ENCODE measurements at regions of chr3 and their contacts with region 1.

Region 1: DNA sequence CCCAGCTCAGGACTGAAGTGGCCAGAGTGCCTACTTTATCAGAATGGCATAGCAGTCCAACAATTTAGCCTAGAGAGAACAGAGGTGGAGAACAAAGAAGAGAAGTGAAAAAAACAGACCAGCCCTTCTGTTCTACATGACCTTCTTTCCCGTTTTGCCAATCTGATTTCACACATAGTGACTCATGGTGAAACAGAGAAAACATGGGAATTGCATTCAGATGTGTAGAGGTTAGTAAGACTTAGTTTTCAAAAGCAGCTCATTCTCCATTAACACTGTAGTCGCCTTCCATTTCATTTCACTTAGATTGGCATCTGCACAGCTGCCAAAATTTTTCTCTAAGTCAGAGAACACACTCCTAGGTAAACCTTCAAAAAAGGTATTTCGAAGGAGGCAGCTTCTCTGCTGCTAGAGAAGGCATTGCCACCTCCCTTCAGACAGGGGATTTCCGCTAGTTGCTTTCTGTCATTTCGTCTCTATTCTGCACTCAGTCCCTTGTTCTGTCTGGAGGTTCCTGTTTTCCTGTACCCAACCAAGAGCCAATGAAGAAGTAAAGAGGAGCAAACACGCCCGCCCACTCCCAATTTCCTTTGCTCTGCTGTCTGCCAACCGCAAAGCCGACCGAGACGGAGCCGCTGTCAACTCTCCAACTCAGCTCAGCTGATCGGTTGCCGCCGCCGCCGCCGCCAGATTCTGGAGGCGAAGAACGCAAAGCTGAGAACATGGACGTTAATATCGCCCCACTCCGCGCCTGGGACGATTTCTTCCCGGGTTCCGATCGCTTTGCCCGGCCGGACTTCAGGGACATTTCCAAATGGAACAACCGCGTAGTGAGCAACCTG is at the start of gene ARL6IP5:
- DNase-seq: peak; percentile 89 to 96 (median 92)
- H3K4me3 ChIP-seq: peak within 1 kb of the TSS; percentile 88 to 95
- H3K4me3 Mint-ChIP-seq: peak within 1 kb of the TSS; percentile 96 to 99 (median 98)
- H3K27ac ChIP-seq: peak within 1 kb of the TSS; percentile 85
- H3K27ac Mint-ChIP-seq: peak within 1 kb of the TSS; percentile 85 to 99 (median 98)
- H3K4me1 ChIP-seq: peaks cover 69% of the 10 kb centered on the region
- H3K4me1 Mint-ChIP-seq: peaks cover 45 to 76% (median 58%) of the 10 kb centered on the region in 4 donors
- H3K27me3 ChIP-seq: no peaks in the 10 kb centered on the region
- H3K27me3 Mint-ChIP-seq: no peaks in the 10 kb centered on the region
- total RNA-seq, gene ARL6IP5: 147 to 156 TPM

Region 2: GRCh38 chr3:69013253-69014021 is 71.1 kb before region 1 on chr3 and contains the start of gene EOGT:
- CTCF ChIA-PET with region 1: no interaction called
- POLR2A ChIA-PET with region 1: interaction called, 13 read pairs
- intact Hi-C with region 1: loop called (anchors 2 kb)
- DNase-seq: peak; percentile 68 to 84 (median 72)
- H3K4me3 ChIP-seq: peak within 1 kb of the TSS; percentile 46 to 64
- H3K4me3 Mint-ChIP-seq: peak within 1 kb of the TSS; percentile 87 to 98 (median 92)
- H3K27ac ChIP-seq: peak within 1 kb of the TSS; percentile 63
- H3K27ac Mint-ChIP-seq: peak within 1 kb of the TSS; percentile 73 to 97 (median 90)
- H3K4me1 ChIP-seq: peaks cover 26% of the 10 kb centered on the region
- H3K4me1 Mint-ChIP-seq: peaks cover 16 to 43% (median 29%) of the 10 kb centered on the region in 4 donors
- H3K27me3 ChIP-seq: no peaks in the 10 kb centered on the region
- H3K27me3 Mint-ChIP-seq: no peaks in the 10 kb centered on the region
- total RNA-seq, gene EOGT: 26.7 to 28.6 TPM

Region 3: GRCh38 chr3:69051756-69052471 is 32.6 kb before region 1 on chr3 and contains the start of gene TMF1:
- CTCF ChIA-PET with region 1: interaction called, 33 read pairs
- POLR2A ChIA-PET with region 1: interaction called, 287 read pairs
- intact Hi-C with region 1: loop called (anchors 1 kb)
- DNase-seq: peak; percentile 96 to 99 (median 98)
- H3K4me3 ChIP-seq: peak within 1 kb of the TSS; percentile 82 to 98
- H3K4me3 Mint-ChIP-seq: peak within 1 kb of the TSS; percentile 94 to 99 (median 98)
- H3K27ac ChIP-seq: peak within 1 kb of the TSS; percentile 96
- H3K27ac Mint-ChIP-seq: peak within 1 kb of the TSS; percentile 97 to 100 (median 99)
- H3K4me1 ChIP-seq: peaks cover 49% of the 10 kb centered on the region
- H3K4me1 Mint-ChIP-seq: peaks cover 32 to 62% (median 41%) of the 10 kb centered on the region in 4 donors
- H3K27me3 ChIP-seq: no peaks in the 10 kb centered on the region
- H3K27me3 Mint-ChIP-seq: no peaks in the 10 kb centered on the region
- total RNA-seq, gene TMF1: 58.5 to 61.0 TPM

Region 4: GRCh38 chr3:69058180-69058946 is 26.2 kb before region 1 on chr3:
- CTCF ChIA-PET with region 1: interaction called, 33 read pairs
- POLR2A ChIA-PET with region 1: interaction called, 287 read pairs
- intact Hi-C with region 1: no loop called
- DNase-seq: peak in 4 of 5 donors; percentile 33 to 55 (median 45)
- H3K4me3 ChIP-seq: no peak overlapping the region
- H3K4me3 Mint-ChIP-seq: peak overlapping the region in 7 of 8 donors; percentile 27 to 75 (median 65)
- H3K27ac ChIP-seq: peak overlapping the region; percentile 17
- H3K27ac Mint-ChIP-seq: peak overlapping the region; percentile 83 to 96 (median 89)
- H3K4me1 ChIP-seq: peaks cover 32% of the 10 kb centered on the region
- H3K4me1 Mint-ChIP-seq: peaks cover 19 to 48% (median 28%) of the 10 kb centered on the region in 4 donors
- H3K27me3 ChIP-seq: no peaks in the 10 kb centered on the region
- H3K27me3 Mint-ChIP-seq: no peaks in the 10 kb centered on the region

Region 5: GRCh38 chr3:69097407-69098086 is 13.0 kb after region 1 on chr3:
- CTCF ChIA-PET with region 1: interaction called, 10 read pairs
- POLR2A ChIA-PET with region 1: interaction called, 117 read pairs
- intact Hi-C with region 1: loop called (anchors 1 kb)
- DNase-seq: no peak
- H3K4me3 ChIP-seq: no peak overlapping the region
- H3K4me3 Mint-ChIP-seq: peak overlapping the region; percentile 11 to 74 (median 48)
- H3K27ac ChIP-seq: no peak overlapping the region
- H3K27ac Mint-ChIP-seq: peak overlapping the region; percentile 57 to 97 (median 88)
- H3K4me1 ChIP-seq: peaks cover 86% of the 10 kb centered on the region
- H3K4me1 Mint-ChIP-seq: peaks cover 52 to 93% (median 71%) of the 10 kb centered on the region in 4 donors
- H3K27me3 ChIP-seq: no peaks in the 10 kb centered on the region
- H3K27me3 Mint-ChIP-seq: no peaks in the 10 kb centered on the region

Region 6: DNA sequence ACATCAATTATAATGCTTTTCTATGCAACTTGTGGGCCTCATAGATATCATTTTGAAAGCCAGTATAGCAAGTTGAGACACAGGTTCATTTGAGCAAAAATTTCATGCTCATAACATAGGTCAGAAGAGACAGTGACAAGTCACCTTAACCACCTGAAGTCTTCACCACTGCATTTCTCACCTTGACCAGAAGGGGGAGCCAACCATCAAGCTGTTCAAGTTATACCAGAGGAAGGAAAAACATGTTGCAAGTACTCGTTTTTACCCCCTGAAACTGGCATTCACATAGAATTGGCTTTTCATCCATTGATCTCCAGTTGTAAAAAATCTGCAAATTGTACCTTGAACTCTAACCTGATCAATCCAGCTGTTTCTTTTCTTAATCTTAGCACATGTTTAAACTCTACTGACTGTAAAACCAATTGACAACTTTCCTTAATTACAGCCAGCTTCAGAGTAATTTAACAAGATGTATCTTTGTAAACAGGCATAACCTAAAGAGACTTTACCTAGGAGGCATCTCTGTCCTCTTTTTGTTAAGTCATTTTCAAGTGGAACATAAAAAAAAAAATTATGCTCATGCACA is 36.4 kb after region 1 on chr3:
- CTCF ChIA-PET with region 1: interaction called, 17 read pairs
- POLR2A ChIA-PET with region 1: interaction called, 4 read pairs
- intact Hi-C with region 1: loop called (anchors 2 kb)
- DNase-seq: peak; percentile 75 to 80 (median 79)
- H3K4me3 ChIP-seq: no peak overlapping the region
- H3K4me3 Mint-ChIP-seq: no peak overlapping the region
- H3K27ac ChIP-seq: no peak overlapping the region
- H3K27ac Mint-ChIP-seq: no peak overlapping the region
- H3K4me1 ChIP-seq: no peaks in the 10 kb centered on the region
- H3K4me1 Mint-ChIP-seq: peaks cover 5% of the 10 kb centered on the region in 4 donors
- H3K27me3 ChIP-seq: no peaks in the 10 kb centered on the region
- H3K27me3 Mint-ChIP-seq: peaks cover 0 to 1% of the 10 kb centered on the region in 2 donors